ENCODE measurements at regions of chr13 and their contacts with region 1.

Region 1: GRCh38 chr13:29595380-29596063 is at the start of gene SLC7A1:
- DNase-seq: peak; percentile 74 to 93 (median 85)
- ATAC-seq: peak; percentile 95
- H3K4me3 ChIP-seq: peak within 1 kb of the TSS; percentile 73
- H3K4me3 Mint-ChIP-seq: peak within 1 kb of the TSS; percentile 88 to 94 (median 90)
- H3K27ac ChIP-seq: peak within 1 kb of the TSS; percentile 82
- H3K27ac Mint-ChIP-seq: peak within 1 kb of the TSS; percentile 74 to 96 (median 87)
- H3K4me1 ChIP-seq: peaks cover 6 to 7% of the 10 kb centered on the region in 2 donors
- H3K4me1 Mint-ChIP-seq: peaks cover 26 to 49% (median 43%) of the 10 kb centered on the region in 7 donors
- H3K27me3 ChIP-seq: no peaks in the 10 kb centered on the region
- H3K27me3 Mint-ChIP-seq: peaks cover 0 to 3% (median 2%) of the 10 kb centered on the region in 5 donors
- total RNA-seq, gene SLC7A1: 12.2 to 63.8 (median 28.2) TPM

Region 2: DNA sequence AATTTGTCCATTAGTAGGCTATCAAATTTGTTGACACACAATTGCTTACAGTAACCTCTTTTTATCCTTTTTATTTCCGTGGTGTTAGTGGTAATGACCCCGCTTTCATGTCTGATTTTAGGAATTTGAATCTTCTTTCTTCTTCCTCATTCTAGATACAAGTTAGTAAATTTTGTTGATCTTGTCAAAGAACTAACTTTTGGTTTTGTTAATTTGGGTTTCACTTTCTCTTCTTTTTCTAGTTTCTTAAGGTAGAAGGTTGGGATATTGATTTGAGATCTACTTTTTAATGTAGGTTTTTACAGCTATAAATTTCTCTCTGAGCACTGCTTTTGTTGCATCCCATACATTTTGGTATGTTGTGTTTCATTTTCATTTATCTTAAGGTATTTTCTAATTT is 53.2 kb after region 1 on chr13:
- CTCF ChIA-PET with region 1: no interaction called
- POLR2A ChIA-PET with region 1: no interaction called
- intact Hi-C with region 1: loop called in 1 of 2 experiments (anchors 5 kb)
- DNase-seq: peak in 1 of 9 donors; percentile 7
- ATAC-seq: no peak
- H3K4me3 ChIP-seq: no peak overlapping the region
- H3K4me3 Mint-ChIP-seq: peak overlapping the region in 6 of 10 donors; percentile 67 to 87 (median 70)
- H3K27ac ChIP-seq: no peak overlapping the region
- H3K27ac Mint-ChIP-seq: peak overlapping the region in 5 of 9 donors; percentile 6 to 75 (median 39)
- H3K4me1 ChIP-seq: no peaks in the 10 kb centered on the region
- H3K4me1 Mint-ChIP-seq: peaks cover 0 to 16% (median 6%) of the 10 kb centered on the region in 7 donors
- H3K27me3 ChIP-seq: no peaks in the 10 kb centered on the region
- H3K27me3 Mint-ChIP-seq: peaks cover 0 to 6% (median 0%) of the 10 kb centered on the region in 5 donors